ENCODE measurements at regions of chr20 and their contacts with region 1.

Region 1: DNA sequence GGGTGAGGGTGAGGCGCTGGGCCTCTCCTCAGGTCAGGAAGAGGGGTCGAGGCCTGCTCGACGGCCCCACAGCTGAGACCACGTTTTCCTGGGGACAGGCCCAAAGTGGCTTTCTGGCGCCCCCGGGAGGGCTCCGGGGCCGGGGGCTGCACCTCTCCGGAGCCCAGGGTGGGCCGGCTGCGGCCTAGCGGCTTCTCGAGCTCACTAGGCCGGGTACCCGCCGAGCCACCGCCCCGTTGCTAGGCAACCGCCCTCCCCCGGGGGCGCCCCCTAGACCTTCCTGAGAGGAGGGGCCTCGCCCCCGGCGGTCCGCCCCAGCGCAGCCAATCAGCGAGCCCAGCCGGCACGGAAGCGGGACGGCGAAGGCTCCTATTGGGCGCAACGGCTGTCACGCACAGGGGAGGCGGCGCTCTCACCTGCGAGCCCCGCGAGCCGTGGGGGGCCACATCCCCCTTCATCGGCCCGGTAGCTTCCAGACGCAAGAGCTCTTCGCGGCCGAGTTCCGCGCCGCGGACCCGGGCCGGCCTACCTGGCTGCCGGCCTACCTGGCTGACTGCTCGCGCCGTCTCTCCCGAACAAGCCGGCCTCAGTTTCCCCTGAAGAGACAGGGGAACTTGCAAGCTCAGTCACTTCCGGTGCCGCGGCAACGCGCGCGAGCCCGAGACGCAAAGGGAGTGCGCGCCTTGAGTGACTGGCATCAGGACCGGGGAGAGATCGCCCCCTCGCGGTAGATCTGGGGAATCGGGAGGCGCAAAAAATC is 831 bp upstream of the BCL2L1 start:
- DNase-seq: peak; percentile 100
- H3K27ac ChIP-seq: peak overlapping the region; percentile 99
- CTCF ChIP-seq: peak; percentile 100

Region 2: DNA sequence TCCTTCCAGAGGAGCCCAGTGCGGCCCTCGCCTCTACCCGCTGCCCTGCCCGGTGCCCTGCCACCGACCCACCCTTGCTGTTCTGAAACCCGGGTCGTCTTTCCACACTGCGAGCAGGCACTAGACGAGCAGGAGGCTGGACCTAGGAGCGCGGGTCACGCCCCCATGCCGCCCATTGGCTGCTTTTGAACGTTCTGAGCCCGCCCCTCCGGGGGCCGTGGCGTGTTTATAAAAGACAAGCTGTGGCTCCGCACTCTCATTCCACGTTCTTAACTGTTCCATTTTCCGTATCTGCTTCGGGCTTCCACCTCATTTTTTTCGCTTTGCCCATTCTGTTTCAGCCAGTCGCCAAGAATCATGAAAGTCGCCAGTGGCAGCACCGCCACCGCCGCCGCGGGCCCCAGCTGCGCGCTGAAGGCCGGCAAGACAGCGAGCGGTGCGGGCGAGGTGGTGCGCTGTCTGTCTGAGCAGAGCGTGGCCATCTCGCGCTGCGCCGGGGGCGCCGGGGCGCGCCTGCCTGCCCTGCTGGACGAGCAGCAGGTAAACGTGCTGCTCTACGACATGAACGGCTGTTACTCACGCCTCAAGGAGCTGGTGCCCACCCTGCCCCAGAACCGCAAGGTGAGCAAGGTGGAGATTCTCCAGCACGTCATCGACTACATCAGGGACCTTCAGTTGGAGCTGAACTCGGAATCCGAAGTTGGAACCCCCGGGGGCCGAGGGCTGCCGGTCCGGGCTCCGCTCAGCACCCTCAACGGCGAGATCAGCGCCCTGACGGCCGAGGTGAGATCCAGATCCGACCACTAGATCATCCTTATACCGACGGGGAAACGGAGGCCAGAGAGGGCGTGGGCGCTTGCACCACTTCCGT is 118.2 kb before region 1 on chr20 and contains the start of gene ID1:
- CTCF ChIA-PET with region 1: interaction called, 30 read pairs
- POLR2A ChIA-PET with region 1: interaction called, 3 read pairs
- DNase-seq: peak; percentile 99
- H3K27ac ChIP-seq: peak within 1 kb of the TSS; percentile 86
- CTCF ChIP-seq: no peak

Region 3: GRCh38 chr20:31630187-31630790 is 93.2 kb before region 1 on chr20:
- CTCF ChIA-PET with region 1: interaction called, 57 read pairs
- POLR2A ChIA-PET with region 1: interaction called, 9 read pairs
- DNase-seq: no peak
- H3K27ac ChIP-seq: peak overlapping the region; percentile 34
- CTCF ChIP-seq: no peak

Region 4: DNA sequence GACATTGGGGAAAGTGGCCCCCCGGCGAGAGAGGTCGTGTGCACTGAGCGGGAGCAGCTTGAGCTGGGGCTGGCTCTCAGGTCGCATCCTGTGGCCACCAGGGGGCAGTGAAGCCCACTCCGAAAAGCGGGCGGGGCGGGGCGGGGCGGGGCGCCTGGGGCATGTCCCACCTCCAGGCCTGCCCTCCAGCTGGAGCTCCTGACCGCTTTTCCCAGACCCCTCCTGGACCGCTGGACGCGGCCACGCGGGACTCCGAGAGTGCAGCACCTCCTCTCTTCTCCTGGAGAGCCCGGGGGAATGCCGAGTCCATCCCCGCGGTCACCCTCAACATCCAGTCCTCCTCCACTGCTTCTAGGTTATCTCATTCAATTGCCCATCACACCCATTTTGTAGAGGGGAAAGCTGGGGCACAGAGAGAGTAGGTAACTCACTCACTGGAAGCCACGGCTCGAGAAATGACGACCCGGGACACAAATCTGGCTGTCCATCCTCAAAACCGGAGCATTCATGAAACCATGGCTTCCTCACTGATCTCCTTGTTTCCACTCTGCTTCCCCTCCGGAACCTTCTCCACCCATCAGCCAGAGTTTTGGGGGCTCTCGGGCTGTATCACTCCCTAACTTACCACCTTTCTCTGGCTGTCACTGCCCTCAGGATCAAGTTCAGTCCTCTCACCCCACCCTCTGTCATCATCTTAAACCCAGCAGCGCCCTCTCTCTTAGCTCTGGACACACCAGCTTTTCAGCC is 61.7 kb before region 1 on chr20:
- CTCF ChIA-PET with region 1: interaction called, 163 read pairs
- POLR2A ChIA-PET with region 1: interaction called, 19 read pairs
- DNase-seq: peak; percentile 89
- H3K27ac ChIP-seq: peak overlapping the region; percentile 71
- CTCF ChIP-seq: peak; percentile 93

Region 5: GRCh38 chr20:31684153-31685015 is 39.1 kb before region 1 on chr20:
- CTCF ChIA-PET with region 1: interaction called, 12 read pairs
- POLR2A ChIA-PET with region 1: no interaction called
- DNase-seq: no peak
- H3K27ac ChIP-seq: peak overlapping the region; percentile 51
- CTCF ChIP-seq: no peak

Region 6: GRCh38 chr20:31698803-31699718 is 24.4 kb before region 1 on chr20:
- CTCF ChIA-PET with region 1: interaction called, 16 read pairs
- POLR2A ChIA-PET with region 1: interaction called, 7 read pairs
- DNase-seq: peak; percentile 95
- H3K27ac ChIP-seq: peak overlapping the region; percentile 76
- CTCF ChIP-seq: no peak

Region 7: GRCh38 chr20:31712564-31713311 is 10.8 kb before region 1 on chr20:
- CTCF ChIA-PET with region 1: interaction called, 16 read pairs
- POLR2A ChIA-PET with region 1: interaction called, 5 read pairs
- DNase-seq: peak; percentile 98
- H3K27ac ChIP-seq: peak overlapping the region; percentile 97
- CTCF ChIP-seq: no peak

Region 8: GRCh38 chr20:31861346-31862156 is 138.1 kb after region 1 on chr20:
- CTCF ChIA-PET with region 1: no interaction called
- POLR2A ChIA-PET with region 1: no interaction called
- DNase-seq: peak; percentile 92
- H3K27ac ChIP-seq: no peak overlapping the region
- CTCF ChIP-seq: no peak

Region 9: GRCh38 chr20:31879143-31879987 is 155.9 kb after region 1 on chr20:
- CTCF ChIA-PET with region 1: no interaction called
- POLR2A ChIA-PET with region 1: no interaction called
- DNase-seq: peak; percentile 99
- H3K27ac ChIP-seq: peak overlapping the region; percentile 64
- CTCF ChIP-seq: no peak

Measured in RWPE1 (cell line).